Activated CD8-positive, alpha-beta T cell treated with anti-CD3 and anti-CD28 coated beads for 36 hours (primary cell): ENCODE measurements at regions of chr4 and their contacts with region 1.

Region 1: GRCh38 chr4:52983563-52984303 is 121.6 kb downstream of the RASL11B start:
- DNase-seq: no peak
- ATAC-seq: peak; percentile 30
- H3K4me3 Mint-ChIP-seq: no peak overlapping the region
- H3K27ac Mint-ChIP-seq: no peak overlapping the region
- H3K4me1 Mint-ChIP-seq: no peaks in the 10 kb centered on the region
- H3K27me3 Mint-ChIP-seq: no peaks in the 10 kb centered on the region
- CTCF ChIP-seq: peak; percentile 79

Region 2: GRCh38 chr4:52376132-52376704 is 607.5 kb before region 1 on chr4:
- CTCF ChIA-PET with region 1: interaction called, 9 read pairs
- POLR2A ChIA-PET with region 1: no interaction called
- intact Hi-C with region 1: loop called (anchors 5 kb)
- DNase-seq: peak; percentile 30
- ATAC-seq: no peak
- H3K4me3 Mint-ChIP-seq: no peak overlapping the region
- H3K27ac Mint-ChIP-seq: no peak overlapping the region
- H3K4me1 Mint-ChIP-seq: no peaks in the 10 kb centered on the region
- H3K27me3 Mint-ChIP-seq: peaks cover 7% of the 10 kb centered on the region
- CTCF ChIP-seq: peak; percentile 87

Region 3: GRCh38 chr4:52545099-52546069 is 438.3 kb before region 1 on chr4:
- CTCF ChIA-PET with region 1: interaction called, 53 read pairs
- POLR2A ChIA-PET with region 1: no interaction called
- intact Hi-C with region 1: loop called (anchors 10 kb)
- DNase-seq: peak; percentile 62
- ATAC-seq: peak; percentile 64
- H3K4me3 Mint-ChIP-seq: no peak overlapping the region
- H3K27ac Mint-ChIP-seq: no peak overlapping the region
- H3K4me1 Mint-ChIP-seq: no peaks in the 10 kb centered on the region
- H3K27me3 Mint-ChIP-seq: peaks cover 2% of the 10 kb centered on the region
- CTCF ChIP-seq: peak; percentile 83